ENCODE measurements at regions of chr11 and their contacts with region 1.

Region 1: DNA sequence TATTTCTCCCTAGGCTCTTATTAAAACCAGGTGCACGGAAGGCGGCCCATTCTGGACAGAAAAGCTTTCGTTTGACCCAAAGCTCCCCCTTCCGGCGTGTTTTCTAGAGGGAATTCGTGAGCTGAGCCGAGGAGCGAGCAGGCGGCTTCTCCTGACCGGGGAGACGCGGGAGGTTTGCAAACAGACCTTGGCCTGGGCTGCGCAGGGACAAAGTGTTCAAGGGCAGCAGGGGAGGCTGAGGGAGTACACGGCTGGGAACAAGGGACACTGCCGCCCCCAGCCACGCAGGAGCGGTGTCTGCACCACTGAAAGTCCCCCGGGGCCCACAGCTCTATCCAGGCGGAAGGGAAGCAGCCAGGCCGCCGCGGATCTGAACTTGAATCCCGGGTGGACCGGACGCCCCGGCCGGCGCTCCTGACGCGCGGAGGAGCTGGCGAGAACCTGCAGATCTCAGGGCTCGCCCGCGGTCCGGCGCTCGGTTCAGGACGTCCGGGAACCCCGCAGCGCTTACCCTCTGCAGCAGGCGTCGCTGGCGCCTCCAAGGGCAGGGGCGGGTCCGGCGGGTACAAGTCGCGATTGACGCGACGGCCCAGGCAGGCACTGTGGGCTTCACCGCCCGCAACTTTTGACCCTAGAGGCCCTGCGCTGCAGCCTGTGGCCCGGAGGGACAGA is 101.9 kb downstream of the WT1 start:
- DNase-seq: peak; percentile 82
- H3K4me3 ChIP-seq: peak overlapping the region; percentile 4
- H3K27ac ChIP-seq: no peak overlapping the region
- H3K4me1 ChIP-seq: peaks cover 12% of the 10 kb centered on the region
- H3K27me3 ChIP-seq: no peaks in the 10 kb centered on the region
- CTCF ChIP-seq: peak; percentile 67

Region 2: DNA sequence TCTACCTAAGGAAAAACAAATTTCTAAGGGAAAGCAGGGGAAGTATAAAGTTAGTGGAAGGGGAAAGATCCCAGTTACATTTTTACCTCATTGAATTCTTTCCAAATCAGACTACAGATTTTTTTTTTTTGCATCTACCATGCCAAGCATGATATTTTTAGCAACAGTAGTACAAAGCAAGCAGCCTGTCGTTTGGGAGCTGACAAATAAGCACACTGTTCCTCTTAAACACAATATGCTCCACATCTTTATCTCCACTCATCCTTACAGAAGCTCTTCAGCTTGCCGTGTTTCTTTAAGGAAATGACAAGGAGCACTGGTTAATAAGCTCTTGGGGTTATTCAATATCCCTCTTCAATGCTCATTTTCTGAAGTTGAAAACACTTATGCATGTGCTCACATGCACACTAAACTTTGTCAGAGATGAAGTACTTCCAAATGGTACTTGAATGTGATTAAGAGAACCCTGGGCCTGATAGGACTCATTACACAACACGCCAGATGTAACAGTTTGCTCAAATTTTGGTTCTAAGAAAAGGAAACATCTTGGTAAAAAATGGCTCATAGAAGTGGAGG is 576.1 kb before region 1 on chr11:
- CTCF ChIA-PET with region 1: no interaction called
- POLR2A ChIA-PET with region 1: no interaction called
- intact Hi-C with region 1: no loop called
- DNase-seq: no peak
- H3K4me3 ChIP-seq: no peak overlapping the region
- H3K27ac ChIP-seq: no peak overlapping the region
- H3K4me1 ChIP-seq: no peaks in the 10 kb centered on the region
- H3K27me3 ChIP-seq: no peaks in the 10 kb centered on the region
- CTCF ChIP-seq: no peak

Region 3: GRCh38 chr11:32312865-32313403 is 20.5 kb before region 1 on chr11:
- CTCF ChIA-PET with region 1: interaction called, 11 read pairs
- POLR2A ChIA-PET with region 1: no interaction called
- intact Hi-C with region 1: no loop called
- DNase-seq: peak; percentile 97
- H3K4me3 ChIP-seq: no peak overlapping the region
- H3K27ac ChIP-seq: no peak overlapping the region
- H3K4me1 ChIP-seq: peaks cover 9% of the 10 kb centered on the region
- H3K27me3 ChIP-seq: no peaks in the 10 kb centered on the region
- CTCF ChIP-seq: peak; percentile 100

Region 4: GRCh38 chr11:32489464-32489863 is 156.0 kb after region 1 on chr11:
- CTCF ChIA-PET with region 1: no interaction called
- POLR2A ChIA-PET with region 1: interaction called, 11 read pairs
- intact Hi-C with region 1: no loop called
- DNase-seq: no peak
- H3K4me3 ChIP-seq: no peak overlapping the region
- H3K27ac ChIP-seq: no peak overlapping the region
- H3K4me1 ChIP-seq: no peaks in the 10 kb centered on the region
- H3K27me3 ChIP-seq: peaks cover 32% of the 10 kb centered on the region
- CTCF ChIP-seq: 0 out of 2 replicates have a peak, but pooled peaks have one; percentile 22

Region 5: GRCh38 chr11:32658639-32659406 is 325.4 kb after region 1 on chr11:
- CTCF ChIA-PET with region 1: no interaction called
- POLR2A ChIA-PET with region 1: interaction called, 13 read pairs
- intact Hi-C with region 1: no loop called
- DNase-seq: no peak
- H3K4me3 ChIP-seq: no peak overlapping the region
- H3K27ac ChIP-seq: no peak overlapping the region
- H3K4me1 ChIP-seq: no peaks in the 10 kb centered on the region
- H3K27me3 ChIP-seq: peaks cover 42% of the 10 kb centered on the region
- CTCF ChIP-seq: no peak

Region 6: DNA sequence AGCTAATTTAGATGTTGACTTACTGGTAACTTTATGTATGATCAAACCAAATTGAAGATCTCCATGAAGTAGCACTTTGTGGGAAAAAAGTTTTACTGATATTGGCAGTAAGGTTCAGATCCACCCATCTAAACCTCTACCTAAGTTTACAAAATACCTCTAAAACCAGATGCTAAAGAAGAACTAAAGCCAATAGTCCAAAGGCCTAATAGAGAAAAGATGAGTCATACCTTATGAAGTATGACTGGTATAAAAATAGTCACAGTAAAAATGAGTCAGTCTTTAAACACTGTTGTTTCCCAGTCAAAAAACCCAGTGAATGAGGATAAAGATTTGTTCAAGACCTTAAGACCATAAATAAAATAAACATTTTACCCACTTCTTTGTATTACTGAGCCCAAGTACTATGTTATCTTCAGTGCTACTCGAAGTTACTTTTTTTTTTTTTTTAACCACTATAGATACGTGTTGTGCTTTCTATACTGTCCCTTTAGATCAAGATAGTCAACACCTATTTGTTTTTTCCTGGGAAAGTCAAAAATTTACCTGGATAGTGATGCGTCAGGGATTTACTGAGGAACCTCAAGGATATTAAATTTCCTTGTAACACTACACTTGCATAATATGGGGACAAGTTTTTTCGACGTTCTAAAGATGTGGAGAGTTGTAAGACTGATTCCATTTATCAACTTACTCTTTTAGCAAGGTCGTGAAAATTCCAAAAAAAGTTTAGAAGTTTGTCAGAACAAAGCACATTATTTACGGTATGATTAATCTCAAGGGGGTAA is 373.7 kb after region 1 on chr11:
- CTCF ChIA-PET with region 1: no interaction called
- POLR2A ChIA-PET with region 1: interaction called, 28 read pairs
- intact Hi-C with region 1: no loop called
- DNase-seq: peak; percentile 37
- H3K4me3 ChIP-seq: no peak overlapping the region
- H3K27ac ChIP-seq: no peak overlapping the region
- H3K4me1 ChIP-seq: no peaks in the 10 kb centered on the region
- H3K27me3 ChIP-seq: no peaks in the 10 kb centered on the region
- CTCF ChIP-seq: no peak